Mammary epithelial cell (primary cell): ENCODE measurements at regions of chr12 and their contacts with region 1.

Region 1: GRCh38 chr12:110100315-110100970 is 23.7 kb upstream of the IFT81 start:
- DNase-seq: peak; percentile 32
- H3K4me3 ChIP-seq: no peak overlapping the region
- H3K27ac ChIP-seq: no peak overlapping the region
- H3K4me1 ChIP-seq: peaks cover 3% of the 10 kb centered on the region
- H3K27me3 ChIP-seq: no peaks in the 10 kb centered on the region
- CTCF ChIP-seq: peak; percentile 92 to 97

Region 2: DNA sequence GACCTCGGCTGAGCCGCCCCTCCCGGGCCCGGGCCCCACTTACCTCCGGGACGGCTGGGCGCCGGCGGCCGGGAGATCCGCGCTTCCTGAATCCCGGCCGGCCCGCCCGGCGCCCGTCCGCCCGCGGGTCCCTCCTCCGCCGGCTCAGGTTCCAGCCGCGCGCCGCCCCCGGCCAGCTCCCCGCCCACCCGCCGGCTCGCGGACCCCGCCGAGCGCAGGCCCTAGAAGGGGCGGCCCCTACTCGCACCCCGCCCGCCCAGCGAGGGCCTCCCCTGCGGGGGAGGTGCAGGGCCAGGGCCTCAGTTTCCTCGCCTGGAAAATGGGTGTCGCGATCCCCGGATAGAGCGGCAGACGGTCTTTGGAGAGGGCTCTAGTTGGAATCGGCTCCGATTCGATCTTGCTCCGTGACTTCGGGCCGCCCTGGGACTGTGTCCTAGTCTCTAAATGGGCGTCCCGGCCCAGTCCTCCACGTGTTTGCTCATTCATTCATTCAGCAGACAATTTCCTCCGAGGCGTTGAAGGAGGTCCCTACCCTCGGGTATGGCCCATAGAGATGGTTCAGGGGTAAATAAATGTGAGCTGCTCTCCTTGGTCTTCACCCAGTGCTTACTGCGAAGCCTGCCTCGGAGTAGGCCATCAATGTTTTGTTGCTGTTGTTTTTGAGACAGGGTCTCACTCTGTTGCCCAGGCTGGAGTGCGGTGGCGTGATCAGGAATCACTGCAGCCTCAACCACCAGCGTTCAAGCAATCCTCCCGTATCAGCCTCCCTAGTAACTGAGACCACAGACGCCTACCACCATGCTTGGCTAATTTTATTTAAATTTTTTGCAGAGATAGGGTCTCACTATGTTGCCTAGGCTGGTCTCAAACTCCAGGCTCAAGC is 266.9 kb before region 1 on chr12 and contains the start of gene TRPV4:
- CTCF ChIA-PET with region 1: no interaction called
- dilution Hi-C with region 1: no loop called
- in situ Hi-C with region 1: no loop called
- intact Hi-C with region 1: no loop called
- DNase-seq: peak; percentile 32
- H3K4me3 ChIP-seq: peak within 1 kb of the TSS; percentile 48 to 65 (median 64)
- H3K27ac ChIP-seq: no peak within 1 kb of the TSS
- H3K4me1 ChIP-seq: peaks cover 20% of the 10 kb centered on the region
- H3K27me3 ChIP-seq: no peaks in the 10 kb centered on the region
- CTCF ChIP-seq: no peak
- total RNA-seq, gene TRPV4: 3.5 to 9.5 TPM

Region 3: GRCh38 chr12:110039085-110039807 is 61.2 kb before region 1 on chr12:
- CTCF ChIA-PET with region 1: no interaction called
- dilution Hi-C with region 1: no loop called
- in situ Hi-C with region 1: no loop called
- intact Hi-C with region 1: no loop called
- DNase-seq: peak; percentile 76
- H3K4me3 ChIP-seq: no peak overlapping the region
- H3K27ac ChIP-seq: peak overlapping the region; percentile 28
- H3K4me1 ChIP-seq: peaks cover 16% of the 10 kb centered on the region
- H3K27me3 ChIP-seq: no peaks in the 10 kb centered on the region
- CTCF ChIP-seq: no peak

Region 4: GRCh38 chr12:110073049-110073831 is 27.2 kb before region 1 on chr12:
- CTCF ChIA-PET with region 1: no interaction called
- dilution Hi-C with region 1: no loop called
- in situ Hi-C with region 1: no loop called
- intact Hi-C with region 1: no loop called
- DNase-seq: peak; percentile 10
- H3K4me3 ChIP-seq: peak overlapping the region; percentile 30 to 38 (median 31)
- H3K27ac ChIP-seq: no peak overlapping the region
- H3K4me1 ChIP-seq: peaks cover 9% of the 10 kb centered on the region
- H3K27me3 ChIP-seq: no peaks in the 10 kb centered on the region
- CTCF ChIP-seq: no peak

Region 5: GRCh38 chr12:110193196-110193595 is 92.8 kb after region 1 on chr12:
- CTCF ChIA-PET with region 1: interaction called, 10 read pairs
- dilution Hi-C with region 1: no loop called
- in situ Hi-C with region 1: no loop called
- intact Hi-C with region 1: no loop called
- DNase-seq: no peak
- H3K4me3 ChIP-seq: no peak overlapping the region
- H3K27ac ChIP-seq: no peak overlapping the region
- H3K4me1 ChIP-seq: no peaks in the 10 kb centered on the region
- H3K27me3 ChIP-seq: no peaks in the 10 kb centered on the region
- CTCF ChIP-seq: no peak

Region 6: GRCh38 chr12:110245369-110245772 is 144.9 kb after region 1 on chr12:
- CTCF ChIA-PET with region 1: no interaction called
- dilution Hi-C with region 1: no loop called
- in situ Hi-C with region 1: no loop called
- intact Hi-C with region 1: loop called (anchors 1 kb)
- DNase-seq: no peak
- H3K4me3 ChIP-seq: no peak overlapping the region
- H3K27ac ChIP-seq: no peak overlapping the region
- H3K4me1 ChIP-seq: peaks cover 39% of the 10 kb centered on the region
- H3K27me3 ChIP-seq: no peaks in the 10 kb centered on the region
- CTCF ChIP-seq: peak; percentile 41 to 51

Region 7: DNA sequence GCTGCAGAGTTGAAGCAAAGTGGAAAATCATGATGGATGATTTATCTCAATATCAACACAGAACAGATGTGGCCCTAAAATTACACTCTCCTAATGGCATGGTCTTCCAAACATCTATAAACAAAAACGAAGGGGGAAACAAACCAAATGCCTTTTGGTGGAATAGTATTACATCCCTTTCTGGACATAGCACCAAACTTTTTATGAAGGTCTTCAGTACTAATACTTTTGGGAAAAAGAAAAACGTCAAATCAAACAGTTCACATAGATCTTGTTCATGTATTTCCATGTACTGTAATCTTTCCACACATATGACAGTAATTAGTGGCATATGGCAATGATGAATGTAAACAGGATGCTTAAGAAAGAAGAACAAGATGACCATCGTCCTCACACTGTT is 326.0 kb after region 1 on chr12:
- CTCF ChIA-PET with region 1: interaction called, 5 read pairs
- dilution Hi-C with region 1: no loop called
- in situ Hi-C with region 1: loop called (anchors 5 kb)
- intact Hi-C with region 1: loop called (anchors 1 kb)
- DNase-seq: no peak
- H3K4me3 ChIP-seq: no peak overlapping the region
- H3K27ac ChIP-seq: no peak overlapping the region
- H3K4me1 ChIP-seq: no peaks in the 10 kb centered on the region
- H3K27me3 ChIP-seq: no peaks in the 10 kb centered on the region
- CTCF ChIP-seq: no peak

Region 8: GRCh38 chr12:110468212-110469048 is 368.0 kb after region 1 on chr12 and contains the starts of genes FAM216A and GPN3:
- CTCF ChIA-PET with region 1: interaction called, 10 read pairs
- dilution Hi-C with region 1: no loop called
- in situ Hi-C with region 1: no loop called
- intact Hi-C with region 1: no loop called
- DNase-seq: peak; percentile 99
- H3K4me3 ChIP-seq: peak within 1 kb of the TSS; percentile 71 to 85 (median 83)
- H3K27ac ChIP-seq: peak within 1 kb of the TSS; percentile 86
- H3K4me1 ChIP-seq: peaks cover 13% of the 10 kb centered on the region
- H3K27me3 ChIP-seq: no peaks in the 10 kb centered on the region
- CTCF ChIP-seq: no peak
- total RNA-seq, gene FAM216A: 5.2 to 13.5 TPM
- total RNA-seq, gene GPN3: 12.3 to 19.5 TPM